ENCODE measurements at regions of chr13 and their contacts with region 1.

Region 1: GRCh38 chr13:79647538-79647937 is 166.6 kb downstream of the NDFIP2 start:
- DNase-seq: no peak
- ATAC-seq: peak; percentile 30
- H3K4me3 ChIP-seq: no peak overlapping the region
- H3K27ac ChIP-seq: no peak overlapping the region
- H3K4me1 ChIP-seq: no peaks in the 10 kb centered on the region
- H3K27me3 ChIP-seq: peaks cover 0 to 2% of the 10 kb centered on the region in 2 experiments; a peak in 2 of 4 replicates
- CTCF ChIP-seq: no peak
- EP300 ChIP-seq: no peak
- POLR2A ChIP-seq: no peak
- RAD21 ChIP-seq: no peak

Region 2: GRCh38 chr13:78491978-78492377 is 1155.6 kb before region 1 on chr13:
- CTCF ChIA-PET with region 1: no interaction called
- POLR2A ChIA-PET with region 1: no interaction called
- RAD21 ChIA-PET with region 1: no interaction called
- SMC1A ChIA-PET with region 1: no interaction called
- in situ Hi-C with region 1: no loop called
- intact Hi-C with region 1: no loop called
- DNase-seq: no peak
- ATAC-seq: no peak
- H3K4me3 ChIP-seq: no peak overlapping the region
- H3K27ac ChIP-seq: no peak overlapping the region
- H3K4me1 ChIP-seq: no peaks in the 10 kb centered on the region
- H3K27me3 ChIP-seq: no peaks in the 10 kb centered on the region
- CTCF ChIP-seq: no peak
- EP300 ChIP-seq: no peak
- POLR2A ChIP-seq: no peak
- RAD21 ChIP-seq: no peak

Region 3: GRCh38 chr13:79631051-79631659 is 16.4 kb before region 1 on chr13:
- CTCF ChIA-PET with region 1: interaction called, 14 read pairs
- POLR2A ChIA-PET with region 1: interaction called, 3 read pairs
- RAD21 ChIA-PET with region 1: interaction called, 3 read pairs
- SMC1A ChIA-PET with region 1: interaction called, 8 read pairs
- in situ Hi-C with region 1: no loop called
- intact Hi-C with region 1: no loop called
- DNase-seq: no peak
- ATAC-seq: no peak
- H3K4me3 ChIP-seq: no peak overlapping the region
- H3K27ac ChIP-seq: no peak overlapping the region
- H3K4me1 ChIP-seq: no peaks in the 10 kb centered on the region
- H3K27me3 ChIP-seq: no peaks in the 10 kb centered on the region
- CTCF ChIP-seq: no peak
- EP300 ChIP-seq: no peak
- POLR2A ChIP-seq: no peak
- RAD21 ChIP-seq: no peak

Region 4: GRCh38 chr13:79668201-79668752 is 20.7 kb after region 1 on chr13:
- CTCF ChIA-PET with region 1: interaction called, 7 read pairs
- POLR2A ChIA-PET with region 1: interaction called, 5 read pairs
- RAD21 ChIA-PET with region 1: interaction called, 10 read pairs
- SMC1A ChIA-PET with region 1: interaction called, 33 read pairs
- in situ Hi-C with region 1: no loop called
- intact Hi-C with region 1: no loop called
- DNase-seq: no peak
- ATAC-seq: no peak
- H3K4me3 ChIP-seq: no peak overlapping the region
- H3K27ac ChIP-seq: no peak overlapping the region
- H3K4me1 ChIP-seq: no peaks in the 10 kb centered on the region
- H3K27me3 ChIP-seq: no peaks in the 10 kb centered on the region
- CTCF ChIP-seq: no peak
- EP300 ChIP-seq: no peak
- POLR2A ChIP-seq: no peak
- RAD21 ChIP-seq: no peak

Region 5: GRCh38 chr13:79692846-79693245 is 45.3 kb after region 1 on chr13:
- CTCF ChIA-PET with region 1: no interaction called
- POLR2A ChIA-PET with region 1: no interaction called
- RAD21 ChIA-PET with region 1: no interaction called
- SMC1A ChIA-PET with region 1: no interaction called
- in situ Hi-C with region 1: no loop called
- intact Hi-C with region 1: no loop called
- DNase-seq: no peak
- ATAC-seq: no peak
- H3K4me3 ChIP-seq: no peak overlapping the region
- H3K27ac ChIP-seq: no peak overlapping the region
- H3K4me1 ChIP-seq: no peaks in the 10 kb centered on the region
- H3K27me3 ChIP-seq: no peaks in the 10 kb centered on the region
- CTCF ChIP-seq: no peak
- EP300 ChIP-seq: no peak
- POLR2A ChIP-seq: no peak
- RAD21 ChIP-seq: no peak

Region 6: GRCh38 chr13:80012251-80012650 is 364.7 kb after region 1 on chr13:
- CTCF ChIA-PET with region 1: no interaction called
- POLR2A ChIA-PET with region 1: no interaction called
- RAD21 ChIA-PET with region 1: no interaction called
- SMC1A ChIA-PET with region 1: no interaction called
- in situ Hi-C with region 1: no loop called
- intact Hi-C with region 1: no loop called
- DNase-seq: no peak
- ATAC-seq: peak; percentile 90
- H3K4me3 ChIP-seq: no peak overlapping the region
- H3K27ac ChIP-seq: no peak overlapping the region
- H3K4me1 ChIP-seq: no peaks in the 10 kb centered on the region
- H3K27me3 ChIP-seq: no peaks in the 10 kb centered on the region
- CTCF ChIP-seq: no peak
- EP300 ChIP-seq: no peak
- POLR2A ChIP-seq: no peak
- RAD21 ChIP-seq: no peak

Region 7: GRCh38 chr13:80217614-80218456 is 570.3 kb after region 1 on chr13:
- CTCF ChIA-PET with region 1: no interaction called
- POLR2A ChIA-PET with region 1: no interaction called
- RAD21 ChIA-PET with region 1: no interaction called
- SMC1A ChIA-PET with region 1: no interaction called
- in situ Hi-C with region 1: no loop called
- intact Hi-C with region 1: no loop called
- DNase-seq: no peak
- ATAC-seq: no peak
- H3K4me3 ChIP-seq: no peak overlapping the region
- H3K27ac ChIP-seq: no peak overlapping the region
- H3K4me1 ChIP-seq: no peaks in the 10 kb centered on the region
- H3K27me3 ChIP-seq: no peaks in the 10 kb centered on the region
- CTCF ChIP-seq: no peak
- EP300 ChIP-seq: no peak
- POLR2A ChIP-seq: no peak
- RAD21 ChIP-seq: no peak